Left cardiac atrium (tissue), 4 donors: ENCODE measurements at regions of chr19 and their contacts with region 1.

Region 1: DNA sequence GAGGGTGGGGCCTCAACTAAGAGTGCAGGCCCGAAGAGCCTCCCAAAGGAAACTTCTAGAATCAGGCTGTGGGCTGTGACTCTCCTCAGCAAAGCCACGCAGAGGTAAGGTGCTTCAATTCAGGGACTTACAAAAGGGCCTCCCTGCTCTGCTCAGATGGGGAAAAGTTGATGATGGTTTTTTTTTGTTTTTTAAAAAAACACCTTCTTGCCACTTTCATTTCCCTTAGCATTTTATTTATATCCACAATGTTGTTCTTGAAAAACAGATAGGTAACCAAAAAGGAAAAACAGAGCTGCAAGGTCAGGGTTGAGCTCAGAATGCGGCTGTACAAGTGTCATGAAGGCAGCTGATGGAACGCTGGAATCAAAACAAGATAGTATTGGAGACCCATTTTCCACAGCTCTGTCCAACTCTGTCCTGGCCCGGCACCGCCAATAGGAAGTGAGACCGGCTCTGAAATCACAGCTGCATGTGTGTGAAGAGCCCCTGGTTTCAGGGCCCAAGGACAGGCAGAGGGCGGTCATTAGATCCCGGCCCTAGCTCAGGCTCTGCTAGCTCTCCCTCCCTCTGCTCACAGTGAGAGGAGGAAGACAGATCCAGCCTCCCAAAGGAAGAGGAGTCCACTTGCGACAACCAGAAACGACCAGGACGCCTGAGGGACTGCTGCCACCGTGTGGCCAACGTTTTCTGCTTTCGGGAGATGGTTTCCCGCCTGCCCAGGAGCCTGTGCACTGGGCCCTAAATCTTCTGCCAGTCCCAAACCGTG is 58.3 kb downstream of the KLF2 start:
- DNase-seq: peak; percentile 90
- ATAC-seq: peak; percentile 83 to 88

Region 2: DNA sequence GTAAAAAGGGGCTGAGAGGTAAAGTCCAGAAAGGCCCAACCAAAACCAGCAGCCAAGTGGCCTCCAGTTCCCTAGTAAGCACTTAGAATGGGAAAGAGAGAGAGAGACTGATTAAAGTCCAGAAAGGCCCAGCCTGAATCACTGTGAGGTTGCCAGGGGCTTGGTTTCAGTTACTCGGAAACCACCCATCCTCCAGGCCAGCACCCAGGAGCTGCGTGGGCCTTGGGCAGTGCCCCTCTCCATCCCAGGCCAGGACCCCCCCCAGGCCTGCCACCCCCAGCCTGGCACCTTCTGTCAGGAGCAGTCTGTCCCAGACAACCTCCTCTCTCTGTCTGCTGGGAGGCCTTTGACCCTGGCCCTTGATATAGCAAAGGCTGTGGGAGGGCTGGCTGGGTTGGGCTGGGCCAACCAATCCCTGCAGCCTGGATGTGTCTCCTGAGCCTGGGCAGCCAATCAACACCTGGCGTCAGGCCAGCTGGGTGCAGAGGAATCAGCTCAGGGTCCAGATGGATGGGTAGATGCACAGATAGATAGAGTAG is 485.2 kb before region 1 on chr19 and contains the start of gene CYP4F2:
- intact Hi-C with region 1: no loop called
- DNase-seq: no peak
- ATAC-seq: no peak
- total RNA-seq, gene CYP4F2: not detected

Region 3: GRCh38 chr19:16235811-16236652 is 146.9 kb before region 1 on chr19:
- intact Hi-C with region 1: no loop called
- DNase-seq: no peak
- ATAC-seq: no peak

Region 4: GRCh38 chr19:16247353-16248182 is 135.4 kb before region 1 on chr19:
- intact Hi-C with region 1: loop called (anchors 1 to 5 kb)
- DNase-seq: peak; percentile 89
- ATAC-seq: peak; percentile 95 to 98

Region 5: DNA sequence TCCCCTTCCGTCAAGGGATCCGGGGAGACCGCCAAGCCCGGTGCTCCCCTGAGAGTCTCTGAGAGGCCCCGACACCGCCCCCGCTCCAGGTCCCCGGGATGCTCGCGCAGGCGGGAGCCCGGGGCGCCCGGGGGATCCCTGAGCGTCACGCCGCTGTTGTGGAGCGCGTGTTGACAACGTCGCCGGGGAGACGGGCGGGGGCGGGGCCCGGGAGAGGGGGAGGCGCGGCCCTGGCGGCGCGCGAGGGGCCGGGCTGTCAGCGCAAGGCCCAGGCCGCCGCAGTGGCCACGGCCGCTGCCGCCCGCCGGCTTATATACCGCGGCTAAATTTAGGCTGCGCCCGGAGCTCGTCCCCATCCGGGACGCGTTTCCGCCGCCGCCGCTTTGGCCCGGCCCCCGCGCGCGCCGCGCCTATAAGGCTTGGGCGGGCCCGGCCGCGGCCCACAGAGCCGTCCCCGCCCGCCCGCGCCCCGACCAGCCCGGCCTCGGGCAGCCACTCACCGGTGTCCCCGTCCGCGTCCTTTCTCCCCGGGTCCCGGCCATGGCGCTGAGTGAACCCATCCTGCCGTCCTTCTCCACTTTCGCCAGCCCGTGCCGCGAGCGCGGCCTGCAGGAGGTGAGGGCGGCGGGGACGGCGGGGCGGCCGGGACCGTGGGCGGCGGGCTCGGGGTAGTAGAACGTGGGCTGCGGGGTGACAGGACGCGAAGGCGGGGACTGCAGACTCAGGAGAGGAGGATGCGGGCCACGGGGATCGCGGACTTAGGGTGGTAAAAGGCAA is 58.4 kb before region 1 on chr19 and contains the start of gene KLF2:
- intact Hi-C with region 1: loop called in 1 of 2 experiments (anchors 5 kb)
- DNase-seq: peak; percentile 95
- ATAC-seq: peak; percentile 86 to 88
- total RNA-seq, gene KLF2: 66.4 to 77.5 TPM

Region 6: DNA sequence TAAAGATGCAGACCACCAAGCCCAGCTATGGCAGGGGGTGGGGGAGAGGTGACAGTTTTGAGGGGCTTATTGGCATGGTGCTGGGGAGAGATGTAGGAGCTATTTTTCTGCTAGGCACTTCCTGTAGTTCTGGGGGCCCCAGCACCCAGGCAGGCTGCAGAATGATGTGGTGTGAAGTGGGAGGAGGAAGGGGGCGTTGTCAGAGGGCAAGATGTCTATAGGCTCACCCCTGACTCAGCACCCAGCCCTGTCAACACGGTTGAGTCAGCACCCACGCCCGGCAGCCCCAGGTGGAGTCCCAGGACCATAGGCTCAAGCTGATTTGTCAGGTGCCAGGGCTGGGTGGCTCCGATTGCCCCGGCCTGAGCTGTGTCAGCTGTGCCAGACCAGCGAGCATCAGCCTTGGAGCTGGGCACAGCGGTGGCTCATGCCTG is 52.6 kb before region 1 on chr19:
- intact Hi-C with region 1: loop called (anchors 5 to 10 kb)
- DNase-seq: peak; percentile 86
- ATAC-seq: peak; percentile 35 to 60

Region 7: DNA sequence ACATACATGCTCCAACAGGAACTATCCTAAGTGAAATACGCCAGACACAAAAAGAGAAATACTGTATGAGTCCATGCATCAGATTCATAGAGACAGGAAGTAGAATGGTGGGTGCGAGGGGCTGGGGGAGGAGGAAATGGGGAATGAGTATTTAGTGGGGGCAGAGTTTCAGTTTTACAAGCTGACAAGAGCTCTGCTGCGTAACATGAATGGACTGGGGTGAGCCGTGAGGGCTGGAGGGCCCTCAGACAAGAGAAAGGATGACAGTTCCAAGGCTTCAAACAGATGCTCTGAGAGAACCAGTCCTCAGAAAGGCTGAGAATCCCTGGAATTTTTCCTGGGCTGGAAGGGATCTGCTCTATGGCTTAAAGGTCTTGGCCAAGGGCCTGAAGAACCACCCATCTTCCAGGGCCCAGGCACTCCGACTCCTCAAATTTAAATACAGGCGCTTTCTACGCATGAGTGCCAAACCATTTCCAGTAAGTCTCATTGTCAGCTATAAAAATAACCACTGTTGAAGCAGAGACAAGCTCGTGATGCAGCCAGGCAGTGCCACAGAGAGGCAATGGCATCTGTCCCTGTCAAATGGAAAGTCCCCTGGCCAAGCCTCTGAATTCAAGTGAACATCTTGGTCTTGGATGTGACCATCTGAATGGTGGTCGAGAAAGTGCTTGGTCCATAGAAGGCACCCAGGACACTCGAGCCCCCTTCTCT is 40.8 kb before region 1 on chr19:
- intact Hi-C with region 1: loop called (anchors 5 to 10 kb)
- DNase-seq: peak; percentile 52
- ATAC-seq: peak; percentile 65 to 76

Region 8: GRCh38 chr19:16435238-16435917 is 52.4 kb after region 1 on chr19:
- intact Hi-C with region 1: no loop called
- DNase-seq: peak; percentile 51
- ATAC-seq: peak; percentile 73 to 88

Region 9: DNA sequence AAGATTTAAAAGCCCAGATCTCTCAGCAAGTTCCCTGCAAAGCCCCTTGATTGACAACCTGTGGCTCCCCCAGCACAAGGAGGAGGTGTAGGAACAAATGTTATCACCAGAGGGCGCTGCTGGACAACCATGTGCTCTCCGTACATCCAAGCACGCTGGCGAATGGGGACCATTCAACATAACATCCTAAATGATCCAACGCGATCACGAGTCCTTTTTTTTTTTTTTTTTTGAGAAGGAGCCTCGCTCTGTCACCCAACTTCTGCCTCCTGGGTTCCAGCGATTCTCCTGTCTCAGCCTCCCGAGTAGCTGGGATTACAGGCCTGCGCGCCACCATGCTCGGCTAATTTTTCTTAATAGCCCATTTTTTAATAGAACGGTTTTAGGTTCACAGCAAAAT is 388.7 kb after region 1 on chr19:
- intact Hi-C with region 1: no loop called
- DNase-seq: peak; percentile 80
- ATAC-seq: peak; percentile 67 to 84